AG04449 (cell line): ENCODE measurements at regions of chr4 and their contacts with region 1.

Region 1: DNA sequence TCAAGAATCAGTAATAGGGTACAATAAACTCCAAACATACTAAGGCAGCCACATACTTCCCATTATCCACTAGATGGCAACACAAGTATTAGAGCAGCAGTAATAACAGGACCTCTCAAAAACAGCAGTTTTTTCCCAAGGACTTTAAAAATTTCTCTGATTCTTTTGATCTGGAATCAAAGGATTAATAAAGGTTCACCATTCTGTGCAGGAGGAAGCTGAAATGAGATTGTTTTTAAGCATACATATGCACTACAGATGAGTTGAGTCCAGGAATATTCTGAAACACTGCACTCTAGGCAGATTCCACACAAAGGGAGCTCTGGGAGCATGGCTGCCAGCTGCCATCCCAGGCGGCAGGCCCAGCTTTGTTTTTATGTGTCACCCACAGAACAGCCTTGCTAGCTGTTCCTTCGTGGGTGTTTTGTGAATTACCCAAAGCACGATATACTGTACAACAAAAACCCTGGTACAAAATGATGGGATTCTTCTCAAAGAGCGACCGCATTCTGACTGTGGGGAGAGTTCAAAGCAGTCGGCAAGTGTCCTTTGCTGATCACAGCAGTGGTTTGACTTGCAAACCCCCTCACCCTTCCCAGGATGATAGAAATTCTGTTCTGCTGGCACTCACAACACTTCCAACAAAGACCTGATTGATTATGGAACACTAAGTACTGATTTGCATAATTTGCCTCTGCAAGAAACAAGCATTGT is 61.0 kb downstream of the STX18 start:
- DNase-seq: no peak
- H3K4me3 ChIP-seq: no peak overlapping the region
- CTCF ChIP-seq: peak; percentile 43

Region 2: GRCh38 chr4:4248029-4248884 is 232.6 kb before region 1 on chr4 and contains the start of gene TMEM128:
- CTCF ChIA-PET with region 1: no interaction called
- POLR2A ChIA-PET with region 1: no interaction called
- DNase-seq: peak; percentile 55
- H3K4me3 ChIP-seq: peak within 1 kb of the TSS; percentile 77
- CTCF ChIP-seq: peak; percentile 3

Region 3: DNA sequence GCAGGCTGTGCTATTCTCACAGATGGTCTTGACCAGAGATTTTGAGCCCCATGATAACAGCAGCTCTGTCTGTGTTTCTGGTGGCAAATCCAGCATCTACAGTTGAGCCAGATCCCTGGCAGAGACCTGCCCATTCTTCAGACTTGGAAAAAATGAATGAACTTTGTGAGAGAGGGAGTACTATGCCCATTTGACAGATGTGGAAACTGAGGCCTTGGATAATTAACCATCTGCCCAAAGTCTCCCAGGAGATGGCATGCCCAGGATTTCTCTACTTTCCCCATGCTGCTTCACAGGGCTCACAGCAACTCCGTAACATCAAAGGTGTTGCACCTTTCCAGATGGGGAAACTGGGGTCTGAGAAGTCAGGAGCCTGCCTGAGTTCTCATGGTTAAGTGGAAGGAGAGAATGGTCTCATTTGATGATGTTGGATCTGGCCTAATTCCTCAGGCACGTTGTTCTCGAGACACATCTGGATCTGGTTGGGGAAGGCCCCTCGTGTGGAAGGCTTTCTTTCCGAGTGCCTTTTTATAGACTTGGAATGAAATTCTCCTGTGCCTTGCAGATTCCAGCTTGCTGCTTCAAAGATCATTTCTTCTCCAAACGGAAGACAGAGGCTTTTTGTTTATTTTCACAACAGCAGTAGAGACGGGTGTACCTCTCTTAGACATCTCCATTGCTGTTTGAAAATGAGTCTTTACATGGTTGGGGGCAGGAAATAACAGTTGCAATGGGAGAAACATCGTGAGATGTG is 134.3 kb after region 1 on chr4:
- CTCF ChIA-PET with region 1: no interaction called
- POLR2A ChIA-PET with region 1: no interaction called
- DNase-seq: peak; percentile 7
- H3K4me3 ChIP-seq: no peak overlapping the region
- CTCF ChIP-seq: no peak

Region 4: GRCh38 chr4:4880492-4880891 is 399.6 kb after region 1 on chr4:
- CTCF ChIA-PET with region 1: interaction called, 21 read pairs
- POLR2A ChIA-PET with region 1: no interaction called
- DNase-seq: no peak
- H3K4me3 ChIP-seq: no peak overlapping the region
- CTCF ChIP-seq: no peak

Region 5: DNA sequence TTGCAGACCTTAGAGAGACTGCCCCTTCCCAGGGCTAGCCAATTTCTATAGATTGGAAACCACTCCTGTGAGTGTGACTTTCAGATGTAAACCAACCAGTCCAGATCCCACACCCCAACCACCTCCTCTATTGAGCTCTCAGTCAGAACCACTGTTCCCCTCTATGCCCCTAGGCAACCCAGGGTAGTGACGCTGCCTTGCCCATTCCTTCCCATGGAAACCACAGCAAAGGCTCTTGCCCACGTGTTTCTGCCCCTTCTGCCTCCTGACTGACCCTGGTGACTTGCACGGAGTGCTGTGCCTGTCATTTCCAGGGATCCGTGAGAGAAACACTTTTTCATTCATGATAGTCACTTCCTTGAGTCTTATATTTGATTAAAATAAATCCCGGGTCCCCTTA is 506.0 kb after region 1 on chr4:
- CTCF ChIA-PET with region 1: no interaction called
- POLR2A ChIA-PET with region 1: no interaction called
- DNase-seq: no peak
- H3K4me3 ChIP-seq: no peak overlapping the region
- CTCF ChIP-seq: no peak